HepG2 (cell line): ENCODE measurements at regions of chr3 and their contacts with region 1.

Region 1: DNA sequence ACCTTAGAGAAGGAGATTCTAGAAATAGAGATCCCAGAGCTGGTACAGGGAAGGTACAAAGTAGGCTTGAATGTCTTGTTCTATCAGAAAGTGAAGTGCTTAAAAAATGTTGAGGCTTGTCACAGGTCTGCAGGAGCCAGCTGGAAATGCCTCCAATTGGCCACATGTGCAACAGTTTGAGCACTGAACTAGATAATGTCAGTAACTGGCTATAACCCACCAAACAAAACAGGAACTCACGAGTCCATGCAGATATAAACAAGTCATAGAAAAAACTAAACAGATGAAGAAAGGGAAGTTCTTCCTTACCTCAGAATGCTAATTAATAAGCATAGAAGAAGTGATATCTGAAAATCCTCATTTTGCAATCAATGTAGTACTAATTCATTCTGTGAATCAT is 11.9 kb upstream of the TF start:
- DNase-seq: no peak
- ATAC-seq: no peak
- H3K4me3 ChIP-seq: no peak overlapping the region
- H3K27ac ChIP-seq: peak overlapping the region; percentile 63
- H3K4me1 ChIP-seq: peaks cover 68% of the 10 kb centered on the region
- H3K27me3 ChIP-seq: no peaks in the 10 kb centered on the region
- CTCF ChIP-seq: no peak
- EP300 ChIP-seq: no peak
- POLR2A ChIP-seq: no peak
- RAD21 ChIP-seq: no peak

Region 2: DNA sequence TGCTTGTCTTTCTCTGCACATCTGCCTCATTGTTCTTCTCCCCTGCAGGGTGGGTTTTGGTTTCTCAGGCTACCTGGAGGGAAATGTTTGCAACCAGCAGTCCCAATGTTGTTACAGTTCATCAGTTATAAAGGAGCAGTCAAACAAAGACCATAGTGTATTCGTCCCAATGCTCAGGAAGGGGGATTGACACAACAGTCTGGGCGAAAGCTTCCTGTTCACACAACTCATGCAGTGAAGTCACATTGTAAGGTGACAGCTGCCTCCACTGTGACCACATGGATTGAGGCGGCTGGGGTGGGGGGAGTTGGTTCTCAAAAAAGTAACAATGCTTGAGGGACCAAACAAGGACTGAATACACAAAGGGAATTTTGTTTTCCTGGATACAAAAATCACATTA is 16.9 kb before region 1 on chr3:
- CTCF ChIA-PET with region 1: no interaction called
- POLR2A ChIA-PET with region 1: no interaction called
- in situ Hi-C with region 1: no loop called
- intact Hi-C with region 1: loop called (anchors 2 kb)
- DNase-seq: peak; percentile 75
- ATAC-seq: peak; percentile 88
- H3K4me3 ChIP-seq: no peak overlapping the region
- H3K27ac ChIP-seq: no peak overlapping the region
- H3K4me1 ChIP-seq: peaks cover 40% of the 10 kb centered on the region
- H3K27me3 ChIP-seq: peaks cover 0 to 4% of the 10 kb centered on the region in 2 experiments; a peak in 1 of 5 replicates
- CTCF ChIP-seq: no peak; the same call in 1 of the 2 replicates
- EP300 ChIP-seq: peak in 1 of 2 experiments; percentile 31; a peak in 1 of 4 replicates
- POLR2A ChIP-seq: no peak
- RAD21 ChIP-seq: no peak